ENCODE measurements at regions of chr9 and their contacts with region 1.

Region 1: GRCh38 chr9:84397151-84397728 is 56.7 kb upstream of the SLC28A3 start:
- DNase-seq: peak; percentile 25 to 76 (median 46)
- ATAC-seq: peak; percentile 46
- H3K4me3 ChIP-seq: no peak overlapping the region
- H3K4me3 Mint-ChIP-seq: no peak overlapping the region
- H3K27ac ChIP-seq: no peak overlapping the region
- H3K27ac Mint-ChIP-seq: no peak overlapping the region
- H3K4me1 ChIP-seq: peaks cover 4% of the 10 kb centered on the region
- H3K4me1 Mint-ChIP-seq: no peaks in the 10 kb centered on the region
- H3K27me3 ChIP-seq: peaks cover 0 to 5% of the 10 kb centered on the region in 2 experiments
- H3K27me3 Mint-ChIP-seq: peaks cover 10% of the 10 kb centered on the region
- CTCF ChIP-seq: peak; percentile 86

Region 2: GRCh38 chr9:83992421-83992820 is 404.8 kb before region 1 on chr9:
- CTCF ChIA-PET with region 1: no interaction called
- POLR2A ChIA-PET with region 1: no interaction called
- intact Hi-C with region 1: no loop called
- DNase-seq: no peak
- ATAC-seq: no peak
- H3K4me3 ChIP-seq: no peak overlapping the region
- H3K4me3 Mint-ChIP-seq: no peak overlapping the region
- H3K27ac ChIP-seq: no peak overlapping the region
- H3K27ac Mint-ChIP-seq: no peak overlapping the region
- H3K4me1 ChIP-seq: peaks cover 4% of the 10 kb centered on the region
- H3K4me1 Mint-ChIP-seq: no peaks in the 10 kb centered on the region
- H3K27me3 ChIP-seq: no peaks in the 10 kb centered on the region
- H3K27me3 Mint-ChIP-seq: no peaks in the 10 kb centered on the region
- CTCF ChIP-seq: no peak

Region 3: DNA sequence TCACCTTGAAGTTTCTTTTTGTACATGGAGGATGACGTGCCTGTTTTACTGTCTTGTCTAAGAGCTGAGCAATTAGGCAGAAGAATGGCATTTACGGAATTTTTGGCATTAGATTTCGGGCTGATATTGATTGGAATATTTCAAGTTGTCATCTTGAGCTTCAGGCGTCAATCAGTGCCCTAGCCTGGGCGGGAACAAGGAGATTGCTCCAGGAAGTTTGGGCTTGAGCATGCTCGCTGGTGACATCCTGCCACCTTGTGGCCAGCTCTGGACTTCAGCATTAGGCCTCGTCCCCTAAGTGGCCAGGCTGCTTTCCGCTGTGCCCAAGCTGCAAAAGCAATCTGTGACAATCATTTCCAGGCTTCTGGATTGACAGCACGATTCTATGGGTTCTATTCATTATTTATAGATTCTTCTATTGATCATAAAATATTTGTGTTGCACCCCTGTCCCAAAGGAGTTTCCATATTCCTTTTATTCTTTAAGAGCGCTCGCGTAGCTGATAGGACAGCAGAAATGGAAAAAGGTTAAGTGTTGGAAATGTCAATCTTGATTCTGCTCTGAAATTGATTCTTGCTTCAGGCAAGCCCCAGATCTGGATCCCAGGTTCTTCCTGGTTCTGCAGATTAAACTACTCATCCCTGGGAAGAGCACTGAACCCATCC is 136.0 kb before region 1 on chr9:
- CTCF ChIA-PET with region 1: no interaction called
- POLR2A ChIA-PET with region 1: no interaction called
- intact Hi-C with region 1: no loop called
- DNase-seq: peak; percentile 11 to 73 (median 36)
- ATAC-seq: no peak
- H3K4me3 ChIP-seq: no peak overlapping the region
- H3K4me3 Mint-ChIP-seq: no peak overlapping the region
- H3K27ac ChIP-seq: no peak overlapping the region
- H3K27ac Mint-ChIP-seq: no peak overlapping the region
- H3K4me1 ChIP-seq: peaks cover 3% of the 10 kb centered on the region
- H3K4me1 Mint-ChIP-seq: no peaks in the 10 kb centered on the region
- H3K27me3 ChIP-seq: peaks cover 0 to 5% of the 10 kb centered on the region in 2 experiments
- H3K27me3 Mint-ChIP-seq: peaks cover 20% of the 10 kb centered on the region
- CTCF ChIP-seq: peak; percentile 77

Region 4: GRCh38 chr9:84379740-84380139 is 17.5 kb before region 1 on chr9:
- CTCF ChIA-PET with region 1: no interaction called
- POLR2A ChIA-PET with region 1: no interaction called
- intact Hi-C with region 1: no loop called
- DNase-seq: no peak
- ATAC-seq: no peak
- H3K4me3 ChIP-seq: no peak overlapping the region
- H3K4me3 Mint-ChIP-seq: no peak overlapping the region
- H3K27ac ChIP-seq: no peak overlapping the region
- H3K27ac Mint-ChIP-seq: no peak overlapping the region
- H3K4me1 ChIP-seq: no peaks in the 10 kb centered on the region
- H3K4me1 Mint-ChIP-seq: no peaks in the 10 kb centered on the region
- H3K27me3 ChIP-seq: peaks cover 2 to 3% of the 10 kb centered on the region in 2 experiments
- H3K27me3 Mint-ChIP-seq: peaks cover 30% of the 10 kb centered on the region
- CTCF ChIP-seq: no peak

Region 5: DNA sequence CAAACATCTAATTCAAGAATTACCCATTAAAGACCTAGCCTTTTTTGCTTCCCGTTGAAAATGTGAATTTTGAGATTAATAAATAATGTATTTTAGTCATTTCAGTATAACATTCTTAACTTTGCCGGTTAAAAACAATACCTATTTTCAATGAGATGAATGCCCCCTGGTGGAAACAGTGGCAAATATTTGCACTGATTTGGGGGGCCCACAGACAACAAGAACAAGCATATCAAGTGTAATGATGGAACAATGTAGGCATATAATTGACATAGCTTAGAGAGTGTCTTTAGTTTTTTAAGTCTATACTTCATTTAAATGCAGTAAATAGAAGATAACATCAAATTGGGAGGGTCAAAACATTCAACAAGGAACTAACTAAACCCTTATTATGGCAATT is 384.2 kb after region 1 on chr9:
- CTCF ChIA-PET with region 1: interaction called, 3 read pairs
- POLR2A ChIA-PET with region 1: no interaction called
- intact Hi-C with region 1: loop called in 1 of 2 experiments (anchors 10 kb)
- DNase-seq: peak in 3 of 14 experiments; percentile 9 to 26 (median 17)
- ATAC-seq: no peak
- H3K4me3 ChIP-seq: no peak overlapping the region
- H3K4me3 Mint-ChIP-seq: no peak overlapping the region
- H3K27ac ChIP-seq: no peak overlapping the region
- H3K27ac Mint-ChIP-seq: no peak overlapping the region
- H3K4me1 ChIP-seq: no peaks in the 10 kb centered on the region
- H3K4me1 Mint-ChIP-seq: no peaks in the 10 kb centered on the region
- H3K27me3 ChIP-seq: no peaks in the 10 kb centered on the region
- H3K27me3 Mint-ChIP-seq: peaks cover 11% of the 10 kb centered on the region
- CTCF ChIP-seq: no peak

Region 6: DNA sequence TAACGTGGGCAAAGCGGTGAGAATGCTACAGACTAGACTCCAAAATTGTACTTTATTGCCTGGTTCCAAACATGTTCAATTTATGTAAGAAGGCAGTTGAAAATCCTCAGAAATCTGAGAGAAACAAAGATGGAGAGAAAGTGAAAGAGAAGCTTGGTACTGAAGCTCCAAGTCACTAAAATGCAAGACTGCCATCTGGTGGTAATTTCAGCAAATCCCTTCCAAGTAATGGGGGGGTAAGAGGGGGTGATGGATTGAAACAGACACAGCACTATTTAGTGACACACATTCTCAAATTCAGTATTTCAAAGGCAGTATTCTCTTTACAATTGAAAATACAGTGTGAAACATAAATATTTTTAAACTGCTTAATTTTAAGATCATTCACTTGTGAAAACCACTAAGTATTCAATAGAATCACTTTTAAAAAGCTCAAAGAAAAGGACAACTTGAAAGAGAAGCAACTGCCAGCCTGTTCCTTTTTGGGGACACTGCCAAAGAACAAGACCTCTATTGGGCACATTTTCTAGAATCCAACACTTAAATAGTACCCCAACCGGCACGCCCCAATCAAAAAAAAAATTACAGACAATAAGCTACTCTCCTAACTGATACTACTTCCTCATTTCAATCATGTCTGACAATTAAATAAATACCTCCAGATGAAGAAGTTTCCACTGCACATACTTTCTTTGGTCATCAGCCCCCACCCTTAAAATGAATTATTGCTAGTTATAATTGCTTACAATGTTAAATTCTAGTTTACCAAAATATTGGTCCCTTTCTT is 1213.0 kb after region 1 on chr9:
- CTCF ChIA-PET with region 1: interaction called, 24 read pairs
- POLR2A ChIA-PET with region 1: interaction called, 6 read pairs
- intact Hi-C with region 1: loop called (anchors 1 to 5 kb)
- DNase-seq: peak in 9 of 14 experiments; percentile 6 to 83 (median 22)
- ATAC-seq: peak; percentile 97
- H3K4me3 ChIP-seq: no peak overlapping the region
- H3K4me3 Mint-ChIP-seq: peak overlapping the region; percentile 22
- H3K27ac ChIP-seq: no peak overlapping the region
- H3K27ac Mint-ChIP-seq: peak overlapping the region; percentile 57
- H3K4me1 ChIP-seq: no peaks in the 10 kb centered on the region
- H3K4me1 Mint-ChIP-seq: peaks cover 9% of the 10 kb centered on the region
- H3K27me3 ChIP-seq: no peaks in the 10 kb centered on the region
- H3K27me3 Mint-ChIP-seq: no peaks in the 10 kb centered on the region
- CTCF ChIP-seq: peak; percentile 84

Region 7: DNA sequence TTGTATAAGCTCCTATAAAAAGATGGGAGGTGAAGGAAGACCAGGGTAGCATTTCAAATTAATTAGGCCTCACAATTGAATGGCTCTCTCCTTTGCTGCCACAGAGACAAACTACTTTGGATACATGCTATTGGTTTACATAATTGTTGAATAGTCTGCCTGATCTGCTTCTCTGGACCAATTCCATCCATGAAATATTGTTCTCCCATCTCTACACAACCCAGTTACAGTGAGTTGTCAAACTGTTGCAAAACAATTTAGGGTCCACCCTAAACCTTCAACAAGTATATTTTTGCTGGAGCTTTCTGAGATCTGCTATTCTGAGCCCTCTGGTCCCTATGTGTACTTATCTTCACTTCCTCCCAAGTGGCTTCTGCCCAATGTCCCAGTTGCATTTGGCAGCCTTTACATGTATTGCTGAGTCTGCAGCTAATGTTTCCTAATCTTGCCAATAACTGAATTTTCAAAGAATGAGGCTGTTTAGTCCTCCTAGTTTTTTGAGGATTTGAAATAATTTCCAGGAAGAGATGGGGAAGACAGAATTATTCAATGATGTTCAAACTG is 1305.6 kb after region 1 on chr9:
- CTCF ChIA-PET with region 1: no interaction called
- POLR2A ChIA-PET with region 1: no interaction called
- intact Hi-C with region 1: loop called in 1 of 2 experiments (anchors 5 kb)
- DNase-seq: no peak
- ATAC-seq: no peak
- H3K4me3 ChIP-seq: no peak overlapping the region
- H3K4me3 Mint-ChIP-seq: no peak overlapping the region
- H3K27ac ChIP-seq: no peak overlapping the region
- H3K27ac Mint-ChIP-seq: peak overlapping the region; percentile 3
- H3K4me1 ChIP-seq: no peaks in the 10 kb centered on the region
- H3K4me1 Mint-ChIP-seq: peaks cover 56% of the 10 kb centered on the region
- H3K27me3 ChIP-seq: no peaks in the 10 kb centered on the region
- H3K27me3 Mint-ChIP-seq: no peaks in the 10 kb centered on the region
- CTCF ChIP-seq: no peak